CD4-positive, alpha-beta memory T cell (primary cell): ENCODE measurements at regions of chr4 and their contacts with region 1.

Region 1: DNA sequence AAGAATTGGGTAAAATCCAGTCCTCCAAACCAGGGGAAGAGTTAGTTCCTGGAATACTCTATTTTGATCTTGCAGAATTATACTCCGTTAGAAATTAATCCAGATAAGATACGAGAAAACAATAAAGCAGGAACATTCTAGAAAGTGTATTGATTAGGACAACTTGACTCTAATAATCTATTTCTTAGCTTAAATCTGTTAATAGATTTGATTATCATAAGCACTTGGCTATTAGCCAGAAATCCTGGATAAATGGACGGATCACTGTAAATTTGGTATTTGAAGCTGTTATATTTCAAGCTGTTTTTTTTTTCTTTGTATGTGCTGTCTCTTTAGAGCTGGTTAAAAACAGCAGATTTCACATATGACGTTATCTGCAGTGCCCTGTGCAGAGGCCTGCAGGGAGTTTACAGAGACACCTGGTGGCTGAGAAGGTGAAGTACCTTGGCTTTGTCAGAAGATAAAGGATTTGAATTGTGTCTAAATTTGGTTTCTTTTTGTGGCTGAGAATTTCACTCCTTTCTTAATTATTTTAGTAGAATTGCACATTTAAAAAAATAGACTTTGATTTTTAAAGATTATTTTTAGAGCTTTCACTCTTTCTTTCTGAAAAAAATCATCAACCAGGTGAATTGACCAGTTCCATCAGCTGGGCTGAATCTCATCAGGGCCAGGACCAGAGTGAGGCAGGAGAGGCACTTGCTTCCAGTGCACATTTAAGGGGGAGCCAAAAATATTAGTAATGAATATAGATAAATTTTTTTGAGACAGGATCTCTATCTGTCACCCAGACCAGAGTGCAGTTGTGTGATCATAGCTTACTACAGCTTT is 9.7 kb upstream of the CHRNA9 start:
- DNase-seq: peak; percentile 75 to 83 (median 79)
- H3K4me3 ChIP-seq: no peak overlapping the region
- H3K4me3 Mint-ChIP-seq: no peak overlapping the region
- H3K27ac ChIP-seq: no peak overlapping the region
- H3K27ac Mint-ChIP-seq: peak overlapping the region in 5 of 7 donors; percentile 2 to 80 (median 48)
- H3K4me1 ChIP-seq: peaks cover 5% of the 10 kb centered on the region
- H3K4me1 Mint-ChIP-seq: peaks cover 5 to 17% (median 6%) of the 10 kb centered on the region in 4 donors
- H3K27me3 ChIP-seq: no peaks in the 10 kb centered on the region
- H3K27me3 Mint-ChIP-seq: peaks cover 0 to 6% of the 10 kb centered on the region in 2 donors

Region 2: GRCh38 chr4:39697740-39698423 is 627.5 kb before region 1 on chr4 and contains the start of gene UBE2K:
- CTCF ChIA-PET with region 1: interaction called, 5 read pairs
- POLR2A ChIA-PET with region 1: no interaction called
- intact Hi-C with region 1: loop called (anchors 5 kb)
- DNase-seq: peak; percentile 86 to 93 (median 91)
- H3K4me3 ChIP-seq: peak within 1 kb of the TSS; percentile 79 to 93
- H3K4me3 Mint-ChIP-seq: peak within 1 kb of the TSS; percentile 96 to 100 (median 98)
- H3K27ac ChIP-seq: peak within 1 kb of the TSS; percentile 88
- H3K27ac Mint-ChIP-seq: peak within 1 kb of the TSS; percentile 94 to 100 (median 99)
- H3K4me1 ChIP-seq: peaks cover 50% of the 10 kb centered on the region
- H3K4me1 Mint-ChIP-seq: peaks cover 27 to 54% (median 37%) of the 10 kb centered on the region in 4 donors
- H3K27me3 ChIP-seq: no peaks in the 10 kb centered on the region
- H3K27me3 Mint-ChIP-seq: no peaks in the 10 kb centered on the region
- total RNA-seq, gene UBE2K: 45.0 to 51.2 TPM

Region 3: DNA sequence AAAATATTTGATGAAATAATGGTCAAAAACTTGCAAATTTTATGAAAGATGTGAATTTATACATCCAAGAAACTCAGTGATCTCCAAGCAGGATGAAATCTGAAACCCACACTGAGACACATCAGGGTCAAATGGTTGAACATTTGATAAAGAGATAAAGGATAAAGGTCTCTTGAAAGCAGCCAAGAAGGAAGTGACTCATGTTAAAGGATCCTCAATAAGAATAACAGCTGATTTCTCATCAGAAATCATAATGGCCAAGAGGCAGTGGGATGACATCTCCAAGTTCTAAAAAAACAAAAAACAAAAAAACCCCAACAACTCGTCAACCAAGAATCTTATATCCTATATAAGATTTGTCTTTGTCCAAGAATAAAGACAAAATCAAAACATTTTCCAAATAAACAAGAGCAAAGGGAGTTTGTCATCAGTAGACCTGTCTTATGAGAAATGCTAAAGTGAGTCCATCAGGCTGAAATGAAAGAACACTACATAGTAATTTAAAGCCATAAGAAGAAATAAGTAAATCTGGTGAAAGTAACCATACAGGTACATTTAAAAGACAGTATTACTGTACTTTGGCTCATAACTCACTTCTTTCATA is 469.4 kb before region 1 on chr4:
- CTCF ChIA-PET with region 1: no interaction called
- POLR2A ChIA-PET with region 1: no interaction called
- intact Hi-C with region 1: no loop called
- DNase-seq: no peak
- H3K4me3 ChIP-seq: no peak overlapping the region
- H3K4me3 Mint-ChIP-seq: no peak overlapping the region
- H3K27ac ChIP-seq: no peak overlapping the region
- H3K27ac Mint-ChIP-seq: peak overlapping the region in 3 of 7 donors; percentile 42 to 68 (median 53)
- H3K4me1 ChIP-seq: no peaks in the 10 kb centered on the region
- H3K4me1 Mint-ChIP-seq: peaks cover 0 to 14% (median 7%) of the 10 kb centered on the region in 4 donors
- H3K27me3 ChIP-seq: no peaks in the 10 kb centered on the region
- H3K27me3 Mint-ChIP-seq: no peaks in the 10 kb centered on the region

Region 4: DNA sequence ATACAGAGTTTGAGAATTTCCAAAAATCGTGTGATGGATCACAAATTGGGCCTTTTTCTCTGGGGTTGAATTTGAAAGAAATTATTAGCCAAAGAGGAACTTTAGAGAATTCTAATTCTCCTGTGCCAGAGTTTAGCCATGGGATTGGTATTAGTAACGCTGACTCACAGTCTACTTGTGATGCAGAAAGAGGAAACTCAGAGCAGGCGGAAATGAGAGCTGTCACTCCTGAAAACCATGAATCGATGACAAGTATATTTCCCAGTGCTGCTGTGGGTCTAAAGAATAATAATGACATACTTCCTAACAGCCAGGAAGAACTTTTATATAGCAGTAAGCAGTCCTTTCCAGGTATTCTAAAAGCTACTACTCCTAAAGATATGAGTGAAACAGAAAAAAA is 203.9 kb before region 1 on chr4:
- CTCF ChIA-PET with region 1: interaction called, 11 read pairs
- POLR2A ChIA-PET with region 1: no interaction called
- intact Hi-C with region 1: no loop called
- DNase-seq: peak in 1 of 5 donors; percentile 35
- H3K4me3 ChIP-seq: no peak overlapping the region
- H3K4me3 Mint-ChIP-seq: peak overlapping the region in 1 of 8 donors; percentile 29
- H3K27ac ChIP-seq: no peak overlapping the region
- H3K27ac Mint-ChIP-seq: peak overlapping the region in 5 of 7 donors; percentile 12 to 77 (median 50)
- H3K4me1 ChIP-seq: peaks cover 46% of the 10 kb centered on the region
- H3K4me1 Mint-ChIP-seq: peaks cover 21 to 43% (median 33%) of the 10 kb centered on the region in 4 donors
- H3K27me3 ChIP-seq: no peaks in the 10 kb centered on the region
- H3K27me3 Mint-ChIP-seq: no peaks in the 10 kb centered on the region

Region 5: GRCh38 chr4:40143926-40144508 is 181.4 kb before region 1 on chr4:
- CTCF ChIA-PET with region 1: interaction called, 24 read pairs
- POLR2A ChIA-PET with region 1: no interaction called
- intact Hi-C with region 1: no loop called
- DNase-seq: no peak
- H3K4me3 ChIP-seq: no peak overlapping the region
- H3K4me3 Mint-ChIP-seq: no peak overlapping the region
- H3K27ac ChIP-seq: no peak overlapping the region
- H3K27ac Mint-ChIP-seq: peak overlapping the region in 3 of 7 donors; percentile 46 to 67 (median 61)
- H3K4me1 ChIP-seq: no peaks in the 10 kb centered on the region
- H3K4me1 Mint-ChIP-seq: peaks cover 0 to 4% (median 1%) of the 10 kb centered on the region in 4 donors
- H3K27me3 ChIP-seq: no peaks in the 10 kb centered on the region
- H3K27me3 Mint-ChIP-seq: no peaks in the 10 kb centered on the region

Region 6: GRCh38 chr4:40228497-40229365 is 96.7 kb before region 1 on chr4:
- CTCF ChIA-PET with region 1: interaction called, 15 read pairs
- POLR2A ChIA-PET with region 1: interaction called, 3 read pairs
- intact Hi-C with region 1: no loop called
- DNase-seq: no peak
- H3K4me3 ChIP-seq: peak overlapping the region in 1 of 2 donors; percentile 33
- H3K4me3 Mint-ChIP-seq: peak overlapping the region; percentile 69 to 93 (median 77)
- H3K27ac ChIP-seq: peak overlapping the region; percentile 72
- H3K27ac Mint-ChIP-seq: peak overlapping the region; percentile 92 to 100 (median 93)
- H3K4me1 ChIP-seq: peaks cover 100% of the 10 kb centered on the region
- H3K4me1 Mint-ChIP-seq: peaks cover 68 to 98% (median 84%) of the 10 kb centered on the region in 4 donors
- H3K27me3 ChIP-seq: no peaks in the 10 kb centered on the region
- H3K27me3 Mint-ChIP-seq: no peaks in the 10 kb centered on the region

Region 7: GRCh38 chr4:40335508-40335860 is 10.1 kb after region 1 on chr4:
- CTCF ChIA-PET with region 1: interaction called, 12 read pairs
- POLR2A ChIA-PET with region 1: no interaction called
- intact Hi-C with region 1: no loop called
- DNase-seq: no peak
- H3K4me3 ChIP-seq: no peak overlapping the region
- H3K4me3 Mint-ChIP-seq: no peak overlapping the region
- H3K27ac ChIP-seq: no peak overlapping the region
- H3K27ac Mint-ChIP-seq: peak overlapping the region in 1 of 7 donors; percentile 6
- H3K4me1 ChIP-seq: no peaks in the 10 kb centered on the region
- H3K4me1 Mint-ChIP-seq: no peaks in the 10 kb centered on the region
- H3K27me3 ChIP-seq: no peaks in the 10 kb centered on the region
- H3K27me3 Mint-ChIP-seq: peaks cover 2 to 7% of the 10 kb centered on the region in 2 donors

Region 8: DNA sequence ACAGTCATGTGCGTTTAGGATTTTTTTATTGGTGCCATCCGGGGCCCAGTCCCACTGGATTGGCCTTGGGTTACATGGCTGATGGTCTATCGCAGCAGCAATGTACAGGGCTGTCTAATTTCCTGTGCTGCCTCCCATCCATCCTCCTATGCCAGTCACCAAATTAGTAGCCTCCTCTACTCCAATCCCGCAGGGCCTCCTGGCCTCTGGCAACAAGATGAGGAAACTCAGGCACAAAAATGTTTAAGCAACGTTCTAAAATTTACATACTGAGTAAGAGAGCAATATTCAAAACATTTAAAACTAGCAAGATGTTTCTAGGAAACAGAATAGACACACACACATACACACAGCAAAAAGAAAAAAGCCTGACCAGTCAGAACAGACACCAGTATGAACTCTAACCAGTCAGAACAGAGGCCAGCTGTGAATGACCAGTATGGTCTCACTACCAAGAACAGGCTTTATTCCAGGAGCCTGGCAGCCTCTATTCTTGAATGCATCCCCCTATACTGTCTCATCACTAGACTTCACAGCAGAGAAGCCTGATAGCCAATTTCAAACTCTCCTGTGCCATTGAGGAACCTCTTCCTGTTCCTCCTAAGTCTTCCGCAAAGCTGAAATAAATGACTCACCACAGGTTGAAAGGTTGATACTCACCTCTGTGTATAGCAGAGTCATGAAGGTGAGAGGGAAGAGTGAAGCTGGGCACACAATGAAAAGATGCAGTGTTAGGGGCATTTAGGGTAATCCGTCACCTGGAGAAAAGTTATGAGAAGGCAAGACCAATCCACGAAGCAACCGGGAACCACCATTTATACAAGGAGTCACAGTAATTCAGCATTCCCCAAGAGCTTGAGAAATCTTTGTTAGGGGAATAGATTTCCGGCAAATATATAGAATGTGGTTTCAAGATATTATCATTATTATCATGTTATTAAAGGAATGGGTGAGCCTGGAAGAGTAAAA is 52.5 kb after region 1 on chr4:
- CTCF ChIA-PET with region 1: no interaction called
- POLR2A ChIA-PET with region 1: no interaction called
- intact Hi-C with region 1: no loop called
- DNase-seq: no peak
- H3K4me3 ChIP-seq: no peak overlapping the region
- H3K4me3 Mint-ChIP-seq: no peak overlapping the region
- H3K27ac ChIP-seq: no peak overlapping the region
- H3K27ac Mint-ChIP-seq: no peak overlapping the region
- H3K4me1 ChIP-seq: no peaks in the 10 kb centered on the region
- H3K4me1 Mint-ChIP-seq: no peaks in the 10 kb centered on the region
- H3K27me3 ChIP-seq: no peaks in the 10 kb centered on the region
- H3K27me3 Mint-ChIP-seq: no peaks in the 10 kb centered on the region

Region 9: GRCh38 chr4:41241919-41242318 is 916.5 kb after region 1 on chr4:
- CTCF ChIA-PET with region 1: no interaction called
- POLR2A ChIA-PET with region 1: no interaction called
- intact Hi-C with region 1: no loop called
- DNase-seq: no peak
- H3K4me3 ChIP-seq: no peak overlapping the region
- H3K4me3 Mint-ChIP-seq: no peak overlapping the region
- H3K27ac ChIP-seq: no peak overlapping the region
- H3K27ac Mint-ChIP-seq: no peak overlapping the region
- H3K4me1 ChIP-seq: no peaks in the 10 kb centered on the region
- H3K4me1 Mint-ChIP-seq: no peaks in the 10 kb centered on the region
- H3K27me3 ChIP-seq: no peaks in the 10 kb centered on the region
- H3K27me3 Mint-ChIP-seq: peaks cover 4% of the 10 kb centered on the region in 2 donors